Ovary (tissue), 10 donors: ENCODE measurements at regions of chr16 and their contacts with region 1.

Region 1: DNA sequence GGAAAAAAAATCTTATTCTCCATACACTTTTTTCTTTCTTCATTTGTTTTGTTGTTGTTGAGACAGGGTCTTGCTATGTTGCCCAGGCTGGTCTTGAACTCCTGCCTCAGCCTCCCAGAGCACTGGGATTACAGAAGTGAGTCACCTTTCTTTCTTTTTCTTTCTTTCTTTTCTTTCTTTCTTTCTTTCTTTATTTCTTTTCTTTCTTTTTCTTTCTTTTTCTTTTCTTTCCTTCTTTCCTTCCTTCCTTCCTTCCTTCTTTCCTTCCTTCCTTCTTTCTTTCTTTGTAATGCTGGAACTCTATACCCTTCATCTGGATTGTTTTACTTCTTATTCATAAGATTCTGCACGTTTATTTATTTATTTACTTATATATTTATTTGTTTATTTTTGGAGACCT is 94.5 kb upstream of the TNRC6A start:
- DNase-seq: no peak
- H3K4me3 ChIP-seq: no peak overlapping the region
- H3K27ac ChIP-seq: no peak overlapping the region
- H3K4me1 ChIP-seq: peaks cover 1% of the 10 kb centered on the region
- H3K27me3 ChIP-seq: no peaks in the 10 kb centered on the region
- CTCF ChIP-seq: no peak
- EP300 ChIP-seq: no peak
- POLR2A ChIP-seq: no peak

Region 2: DNA sequence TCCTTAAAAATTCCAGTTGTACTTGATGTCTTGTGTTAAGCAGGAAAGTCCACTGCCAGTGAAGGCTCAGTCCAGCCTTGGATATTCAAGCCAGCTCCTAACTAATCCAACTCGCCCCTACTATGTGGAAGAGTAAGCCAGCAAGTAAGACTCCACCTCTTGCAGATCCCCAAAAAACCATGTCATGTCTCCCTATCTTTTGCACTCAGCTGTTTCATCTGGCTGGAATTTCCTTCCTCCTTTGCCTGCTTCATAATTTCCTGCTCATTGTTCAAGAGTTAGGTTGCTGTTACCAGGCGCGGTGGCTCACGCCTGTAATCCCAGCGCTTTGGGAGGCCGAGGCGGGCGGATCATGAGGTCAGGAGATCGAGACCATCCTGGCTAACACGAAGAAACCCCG is 57.8 kb before region 1 on chr16:
- intact Hi-C with region 1: no loop called
- DNase-seq: no peak
- H3K4me3 ChIP-seq: no peak overlapping the region
- H3K27ac ChIP-seq: no peak overlapping the region
- H3K4me1 ChIP-seq: no peaks in the 10 kb centered on the region
- H3K27me3 ChIP-seq: no peaks in the 10 kb centered on the region
- CTCF ChIP-seq: no peak
- EP300 ChIP-seq: no peak
- POLR2A ChIP-seq: no peak

Region 3: GRCh38 chr16:25198021-25198420 is 563.1 kb after region 1 on chr16:
- intact Hi-C with region 1: loop called in 1 of 4 experiments (anchors 5 kb)
- DNase-seq: no peak
- H3K4me3 ChIP-seq: no peak overlapping the region
- H3K27ac ChIP-seq: no peak overlapping the region
- H3K4me1 ChIP-seq: no peaks in the 10 kb centered on the region
- H3K27me3 ChIP-seq: no peaks in the 10 kb centered on the region
- CTCF ChIP-seq: no peak
- EP300 ChIP-seq: no peak
- POLR2A ChIP-seq: no peak